ENCODE measurements at regions of chr7 and their contacts with region 1.

Region 1: GRCh38 chr7:144391823-144392255 is 11.7 kb downstream of the NOBOX start:
- DNase-seq: no peak
- H3K4me3 Mint-ChIP-seq: peak overlapping the region; percentile 38
- H3K27ac Mint-ChIP-seq: no peak overlapping the region
- H3K4me1 Mint-ChIP-seq: peaks cover 2% of the 10 kb centered on the region
- H3K27me3 Mint-ChIP-seq: no peaks in the 10 kb centered on the region

Region 2: GRCh38 chr7:144174613-144175012 is 217.2 kb before region 1 on chr7:
- CTCF ChIA-PET with region 1: interaction called, 13 read pairs
- POLR2A ChIA-PET with region 1: no interaction called
- intact Hi-C with region 1: no loop called
- DNase-seq: no peak
- H3K4me3 Mint-ChIP-seq: no peak overlapping the region
- H3K27ac Mint-ChIP-seq: no peak overlapping the region
- H3K4me1 Mint-ChIP-seq: no peaks in the 10 kb centered on the region
- H3K27me3 Mint-ChIP-seq: peaks cover 5% of the 10 kb centered on the region

Region 3: GRCh38 chr7:144454256-144455039 is 62.6 kb after region 1 on chr7:
- CTCF ChIA-PET with region 1: no interaction called
- POLR2A ChIA-PET with region 1: no interaction called
- intact Hi-C with region 1: no loop called
- DNase-seq: no peak
- H3K4me3 Mint-ChIP-seq: no peak overlapping the region
- H3K27ac Mint-ChIP-seq: no peak overlapping the region
- H3K4me1 Mint-ChIP-seq: no peaks in the 10 kb centered on the region
- H3K27me3 Mint-ChIP-seq: no peaks in the 10 kb centered on the region

Region 4: DNA sequence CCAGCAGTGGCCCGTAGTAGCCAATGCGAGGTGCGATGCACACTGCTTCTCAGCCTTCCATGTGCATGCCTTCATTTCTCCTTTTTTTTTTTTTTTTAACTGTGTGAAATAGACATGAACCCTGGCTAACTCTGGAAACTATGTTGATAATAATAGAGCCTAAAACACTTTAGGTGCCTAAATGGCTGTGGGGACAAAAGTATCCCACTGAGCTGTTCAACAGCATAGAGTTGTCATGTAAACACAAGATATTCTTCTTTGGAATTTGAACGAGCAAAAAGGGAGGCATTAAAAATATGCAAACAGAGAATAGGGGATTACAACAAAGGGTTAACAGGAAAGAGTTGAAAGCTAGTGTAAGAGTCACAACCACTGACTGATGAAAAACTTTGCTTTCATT is 173.7 kb after region 1 on chr7:
- CTCF ChIA-PET with region 1: no interaction called
- POLR2A ChIA-PET with region 1: no interaction called
- intact Hi-C with region 1: no loop called
- DNase-seq: no peak
- H3K4me3 Mint-ChIP-seq: no peak overlapping the region
- H3K27ac Mint-ChIP-seq: no peak overlapping the region
- H3K4me1 Mint-ChIP-seq: no peaks in the 10 kb centered on the region
- H3K27me3 Mint-ChIP-seq: no peaks in the 10 kb centered on the region